Common myeloid progenitor, CD34-positive (primary cell): ENCODE measurements at regions of chr6 and their contacts with region 1.

Region 1: GRCh38 chr6:136792410-136793262 is at the start of gene MAP3K5:
- DNase-seq: peak; percentile 93 to 98 (median 97)
- H3K4me3 ChIP-seq: peak within 1 kb of the TSS; percentile 73 to 96 (median 92)
- H3K27ac ChIP-seq: peak within 1 kb of the TSS; percentile 83 to 95
- H3K4me1 ChIP-seq: peaks cover 23 to 39% (median 31%) of the 10 kb centered on the region in 4 experiments
- H3K27me3 ChIP-seq: no peaks in the 10 kb centered on the region

Region 2: DNA sequence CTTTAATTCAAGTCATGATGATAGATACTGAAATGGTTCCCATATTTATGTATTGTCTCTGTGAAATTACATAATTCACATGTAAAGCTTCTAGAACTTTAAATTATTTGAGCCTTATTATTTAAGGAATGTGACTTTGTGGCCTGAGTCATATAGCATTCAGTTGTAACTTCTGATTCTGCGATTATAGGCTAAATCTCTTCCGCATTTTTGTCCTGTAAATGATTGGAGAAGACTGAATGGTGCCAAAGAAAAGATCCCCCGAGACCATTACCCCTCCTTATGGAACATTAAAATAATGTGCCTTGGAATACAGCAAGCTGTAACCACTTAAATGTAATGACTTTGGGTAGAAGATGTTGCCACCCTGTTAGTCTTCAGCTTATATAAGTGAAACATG is 179.2 kb before region 1 on chr6:
- CTCF ChIA-PET with region 1: interaction called, 12 read pairs
- POLR2A ChIA-PET with region 1: no interaction called
- DNase-seq: no peak
- H3K4me3 ChIP-seq: no peak overlapping the region
- H3K27ac ChIP-seq: no peak overlapping the region
- H3K4me1 ChIP-seq: peaks cover 3 to 16% (median 9%) of the 10 kb centered on the region in 4 experiments
- H3K27me3 ChIP-seq: no peaks in the 10 kb centered on the region

Region 3: DNA sequence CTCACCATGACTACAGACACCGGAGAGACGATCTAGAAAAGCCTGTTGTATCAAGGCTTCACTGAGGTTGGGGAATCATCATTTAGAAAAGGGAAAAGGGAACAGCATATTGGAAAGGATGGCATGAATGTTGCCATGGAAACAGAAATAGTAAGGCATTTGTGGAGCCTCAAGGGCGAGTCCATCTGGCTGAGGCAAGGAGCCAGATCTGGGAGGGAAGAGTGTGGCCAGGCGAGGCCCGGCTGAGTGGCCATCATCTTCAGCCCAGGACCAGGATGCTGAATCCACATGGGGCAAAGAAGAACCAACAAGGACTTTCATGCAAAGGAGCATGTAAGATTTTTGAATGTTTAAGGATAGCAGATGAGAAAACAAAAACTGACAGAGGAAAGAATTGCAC is 86.2 kb before region 1 on chr6:
- CTCF ChIA-PET with region 1: interaction called, 12 read pairs
- POLR2A ChIA-PET with region 1: no interaction called
- DNase-seq: no peak
- H3K4me3 ChIP-seq: no peak overlapping the region
- H3K27ac ChIP-seq: no peak overlapping the region
- H3K4me1 ChIP-seq: peaks cover 0 to 7% (median 5%) of the 10 kb centered on the region in 4 experiments
- H3K27me3 ChIP-seq: no peaks in the 10 kb centered on the region

Region 4: DNA sequence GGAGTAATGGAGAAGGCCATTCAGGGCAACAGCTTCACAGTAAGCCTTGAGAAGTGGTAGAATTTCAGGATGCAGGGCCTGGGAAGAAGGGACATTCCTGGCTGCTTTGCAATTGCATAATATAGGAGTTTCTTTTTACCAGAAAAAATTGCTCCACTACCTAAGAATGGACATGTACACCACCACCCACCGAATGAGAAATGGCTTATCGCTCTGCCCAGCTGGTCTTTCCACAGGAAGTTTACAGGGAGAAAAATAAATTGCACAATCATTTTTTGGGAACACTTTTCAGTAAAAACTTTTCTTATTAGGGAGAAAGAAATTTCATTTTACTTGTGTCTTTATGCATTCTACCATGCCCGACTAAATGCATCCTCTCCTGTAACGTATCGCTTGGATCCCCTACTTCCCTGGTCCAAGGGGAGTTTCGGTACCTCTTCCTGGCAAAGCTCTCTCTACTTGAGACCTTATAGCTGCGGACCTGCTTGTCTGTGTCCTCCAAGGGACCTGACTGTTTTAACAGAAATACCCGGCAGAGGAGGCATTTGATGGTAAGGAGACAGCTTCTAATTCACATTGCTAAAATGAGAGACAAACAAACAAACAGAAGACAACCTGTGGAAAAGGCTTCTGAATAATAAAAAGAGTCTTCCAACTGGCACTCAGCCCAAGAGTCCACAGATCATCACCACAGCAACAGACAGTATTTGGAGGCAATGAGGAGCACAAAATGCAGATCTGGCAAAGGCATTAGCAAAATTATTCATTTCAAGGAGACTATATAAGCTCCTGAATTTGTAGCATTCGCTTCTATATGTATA is 54.6 kb before region 1 on chr6:
- CTCF ChIA-PET with region 1: interaction called, 85 read pairs
- POLR2A ChIA-PET with region 1: interaction called, 4 read pairs
- DNase-seq: peak; percentile 40 to 73 (median 62)
- H3K4me3 ChIP-seq: peak overlapping the region in 4 of 7 experiments; percentile 19 to 72 (median 58)
- H3K27ac ChIP-seq: peak overlapping the region; percentile 77 to 82
- H3K4me1 ChIP-seq: peaks cover 8 to 52% (median 30%) of the 10 kb centered on the region in 4 experiments
- H3K27me3 ChIP-seq: no peaks in the 10 kb centered on the region

Region 5: GRCh38 chr6:136761227-136761922 is 31.3 kb before region 1 on chr6:
- CTCF ChIA-PET with region 1: interaction called, 27 read pairs
- POLR2A ChIA-PET with region 1: no interaction called
- DNase-seq: peak in 2 of 3 donors; percentile 52 to 75
- H3K4me3 ChIP-seq: peak overlapping the region in 6 of 7 experiments; percentile 7 to 71 (median 52)
- H3K27ac ChIP-seq: peak overlapping the region; percentile 6 to 52
- H3K4me1 ChIP-seq: peaks cover 23 to 71% (median 58%) of the 10 kb centered on the region in 4 experiments
- H3K27me3 ChIP-seq: no peaks in the 10 kb centered on the region